Activated B cell treated with CpG ODN at 0.5 μM for 24 hours (primary cell): ENCODE measurements at regions of chr12 and their contacts with region 1.

Region 1: DNA sequence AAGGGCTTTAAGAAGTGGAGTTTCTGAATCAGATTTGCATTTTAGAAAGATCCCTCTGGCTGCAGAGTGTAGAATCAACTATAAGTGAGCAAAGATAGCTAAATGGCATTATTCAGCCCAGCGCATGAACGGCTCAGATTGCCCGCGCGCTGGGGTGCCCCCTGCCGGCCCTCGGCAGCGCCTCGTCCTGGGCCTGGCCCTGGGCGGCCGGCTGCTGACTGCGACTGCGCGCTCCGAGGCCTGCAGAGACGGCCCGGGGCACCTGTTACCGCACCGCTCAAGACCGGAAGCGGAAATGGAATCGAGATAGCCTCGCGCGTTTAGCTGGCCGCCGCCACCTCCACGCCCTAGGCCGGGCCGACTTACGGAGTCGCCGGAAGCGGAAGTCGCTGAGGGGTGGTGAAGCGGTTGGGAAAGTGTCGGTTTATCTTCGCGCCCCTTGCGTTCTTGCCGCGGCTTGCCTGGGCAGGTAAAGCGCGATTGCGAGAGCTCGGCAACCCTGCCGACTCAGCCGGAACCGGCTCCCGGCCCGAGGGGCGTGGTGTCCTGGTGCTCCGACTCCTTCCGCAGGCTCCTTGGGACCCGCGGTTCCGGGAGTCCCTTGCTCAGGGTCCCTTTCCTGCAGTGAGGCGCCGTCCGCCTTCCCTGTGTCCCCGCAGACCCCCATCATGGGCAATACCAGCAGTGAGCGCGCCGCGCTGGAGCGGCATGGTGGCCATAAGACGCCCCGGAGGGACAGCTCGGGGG is at the start of gene PRKAB1:
- DNase-seq: peak; percentile 92
- ATAC-seq: peak; percentile 91
- H3K4me3 Mint-ChIP-seq: peak within 1 kb of the TSS; percentile 90
- H3K27ac Mint-ChIP-seq: peak within 1 kb of the TSS; percentile 92
- H3K4me1 Mint-ChIP-seq: peaks cover 59% of the 10 kb centered on the region
- H3K27me3 Mint-ChIP-seq: no peaks in the 10 kb centered on the region
- CTCF ChIP-seq: peak; percentile 39
- total RNA-seq, gene PRKAB1: 43.9 and 49.1 TPM in 2 replicates

Region 2: DNA sequence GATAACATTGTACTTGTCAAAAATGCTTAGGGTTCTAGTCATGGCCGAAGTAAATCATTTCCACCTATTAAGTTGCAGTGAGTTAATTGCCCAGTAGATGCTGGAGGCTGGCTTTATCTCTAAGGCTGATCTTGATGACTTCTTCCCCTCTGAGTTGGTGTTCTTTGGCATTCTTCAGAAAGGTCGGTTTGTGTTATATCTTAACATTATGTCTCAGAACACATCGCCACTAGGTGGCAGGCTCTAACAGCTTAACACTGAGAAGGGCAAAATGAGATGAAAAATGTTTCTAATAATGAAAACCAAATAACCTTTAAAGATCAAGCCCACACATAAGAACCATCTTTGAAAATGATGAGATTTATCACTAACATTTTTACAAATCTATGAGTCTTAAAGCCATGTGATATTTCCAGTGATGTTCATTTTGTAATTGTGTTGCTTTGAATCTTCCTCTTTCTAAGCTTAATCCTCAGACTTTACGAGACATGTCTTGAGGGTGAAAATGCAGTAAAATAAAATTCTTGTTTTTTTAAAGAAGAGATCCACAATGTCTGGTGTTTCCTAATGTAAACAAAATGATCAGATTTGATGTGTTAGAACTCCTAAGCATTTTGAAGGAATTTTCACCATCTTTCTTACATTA is 1262.8 kb before region 1 on chr12:
- CTCF ChIA-PET with region 1: no interaction called
- POLR2A ChIA-PET with region 1: no interaction called
- intact Hi-C with region 1: loop called (anchors 2 kb)
- DNase-seq: no peak
- ATAC-seq: no peak
- H3K4me3 Mint-ChIP-seq: no peak overlapping the region
- H3K27ac Mint-ChIP-seq: no peak overlapping the region
- H3K4me1 Mint-ChIP-seq: no peaks in the 10 kb centered on the region
- H3K27me3 Mint-ChIP-seq: no peaks in the 10 kb centered on the region
- CTCF ChIP-seq: peak; percentile 62

Region 3: GRCh38 chr12:119681961-119682638 is 14.3 kb after region 1 on chr12:
- CTCF ChIA-PET with region 1: interaction called, 19 read pairs
- POLR2A ChIA-PET with region 1: interaction called, 43 read pairs
- intact Hi-C with region 1: loop called (anchors 1 kb)
- DNase-seq: no peak
- ATAC-seq: peak; percentile 71
- H3K4me3 Mint-ChIP-seq: peak overlapping the region; percentile 78
- H3K27ac Mint-ChIP-seq: peak overlapping the region; percentile 96
- H3K4me1 Mint-ChIP-seq: peaks cover 41% of the 10 kb centered on the region
- H3K27me3 Mint-ChIP-seq: no peaks in the 10 kb centered on the region
- CTCF ChIP-seq: no peak

Region 4: GRCh38 chr12:119704065-119704747 is 36.5 kb after region 1 on chr12:
- CTCF ChIA-PET with region 1: no interaction called
- POLR2A ChIA-PET with region 1: no interaction called
- intact Hi-C with region 1: no loop called
- DNase-seq: no peak
- ATAC-seq: no peak
- H3K4me3 Mint-ChIP-seq: no peak overlapping the region
- H3K27ac Mint-ChIP-seq: no peak overlapping the region
- H3K4me1 Mint-ChIP-seq: no peaks in the 10 kb centered on the region
- H3K27me3 Mint-ChIP-seq: no peaks in the 10 kb centered on the region
- CTCF ChIP-seq: no peak

Region 5: DNA sequence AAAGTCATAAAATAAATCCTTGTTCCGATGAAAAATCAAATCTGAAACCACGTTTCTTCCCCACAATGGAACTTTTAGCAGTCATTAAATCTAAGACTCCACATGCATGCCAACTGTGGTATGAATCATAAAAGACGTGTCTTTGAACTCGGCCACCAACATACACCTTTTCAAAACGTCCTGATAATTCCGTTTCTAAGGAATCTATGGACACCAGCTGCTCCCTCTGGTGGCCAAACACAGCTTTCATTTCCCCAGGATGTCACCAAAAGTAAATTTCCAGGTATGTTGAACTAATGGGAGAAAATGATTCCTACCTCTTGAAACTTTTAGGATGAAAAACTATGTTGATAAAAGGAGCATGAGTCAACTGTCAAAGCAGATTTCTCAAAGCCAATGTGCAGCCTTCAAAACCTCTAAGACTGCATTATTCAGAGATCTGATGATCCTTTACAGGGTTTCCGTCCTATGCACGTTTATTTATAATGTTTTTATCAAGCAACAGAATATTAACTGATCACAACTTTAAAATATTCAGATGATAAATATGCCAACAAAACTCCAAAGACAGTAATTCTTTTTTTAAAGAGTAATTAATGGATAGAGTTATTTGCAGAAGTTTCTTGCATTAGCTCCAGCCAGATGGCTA is 113.2 kb after region 1 on chr12:
- CTCF ChIA-PET with region 1: interaction called, 4 read pairs
- POLR2A ChIA-PET with region 1: no interaction called
- intact Hi-C with region 1: loop called (anchors 5 kb)
- DNase-seq: no peak
- ATAC-seq: no peak
- H3K4me3 Mint-ChIP-seq: no peak overlapping the region
- H3K27ac Mint-ChIP-seq: no peak overlapping the region
- H3K4me1 Mint-ChIP-seq: no peaks in the 10 kb centered on the region
- H3K27me3 Mint-ChIP-seq: no peaks in the 10 kb centered on the region
- CTCF ChIP-seq: no peak

Region 6: GRCh38 chr12:119876761-119877638 is 209.2 kb after region 1 on chr12 and contains the start of gene CIT:
- CTCF ChIA-PET with region 1: no interaction called
- POLR2A ChIA-PET with region 1: no interaction called
- intact Hi-C with region 1: loop called (anchors 2 kb)
- DNase-seq: peak; percentile 72
- ATAC-seq: peak; percentile 100
- H3K4me3 Mint-ChIP-seq: peak within 1 kb of the TSS; percentile 91
- H3K27ac Mint-ChIP-seq: peak within 1 kb of the TSS; percentile 0
- H3K4me1 Mint-ChIP-seq: peaks cover 12% of the 10 kb centered on the region
- H3K27me3 Mint-ChIP-seq: peaks cover 2% of the 10 kb centered on the region
- CTCF ChIP-seq: no peak
- total RNA-seq, gene CIT: 3.6 and 6.1 TPM in 2 replicates

Region 7: GRCh38 chr12:119988782-119989668 is 321.3 kb after region 1 on chr12 and contains the start of gene BICDL1:
- CTCF ChIA-PET with region 1: no interaction called
- POLR2A ChIA-PET with region 1: no interaction called
- intact Hi-C with region 1: loop called (anchors 1 kb)
- DNase-seq: peak; percentile 96
- ATAC-seq: peak; percentile 83
- H3K4me3 Mint-ChIP-seq: peak within 1 kb of the TSS; percentile 83
- H3K27ac Mint-ChIP-seq: peak within 1 kb of the TSS; percentile 85
- H3K4me1 Mint-ChIP-seq: peaks cover 23% of the 10 kb centered on the region
- H3K27me3 Mint-ChIP-seq: no peaks in the 10 kb centered on the region
- CTCF ChIP-seq: no peak
- total RNA-seq, gene BICDL1: 15.1 and 16.8 TPM in 2 replicates